T-cell (primary cell): ENCODE measurements at regions of chr2 and their contacts with region 1.

Region 1: GRCh38 chr2:112277596-112278220 is 2.3 kb downstream of the ZC3H6 start:
- DNase-seq: peak in 1 of 35 experiments; percentile 54
- ATAC-seq: no peak
- H3K4me3 ChIP-seq: no peak overlapping the region
- H3K4me3 Mint-ChIP-seq: peak overlapping the region in 2 of 3 donors; percentile 80 to 90
- H3K27ac ChIP-seq: no peak overlapping the region
- H3K27ac Mint-ChIP-seq: peak overlapping the region in 1 of 2 donors; percentile 28
- H3K4me1 ChIP-seq: peaks cover 7 to 10% of the 10 kb centered on the region in 2 experiments
- H3K4me1 Mint-ChIP-seq: peaks cover 41 to 45% (median 44%) of the 10 kb centered on the region in 3 donors
- H3K27me3 ChIP-seq: no peaks in the 10 kb centered on the region
- H3K27me3 Mint-ChIP-seq: no peaks in the 10 kb centered on the region

Region 2: GRCh38 chr2:112121682-112122254 is 155.9 kb before region 1 on chr2:
- CTCF ChIA-PET with region 1: no interaction called
- POLR2A ChIA-PET with region 1: no interaction called
- DNase-seq: peak in 24 of 35 experiments; percentile 12 to 76 (median 40)
- ATAC-seq: peak in 1 of 4 experiments; percentile 39
- H3K4me3 ChIP-seq: no peak overlapping the region
- H3K4me3 Mint-ChIP-seq: no peak overlapping the region
- H3K27ac ChIP-seq: no peak overlapping the region
- H3K27ac Mint-ChIP-seq: no peak overlapping the region
- H3K4me1 ChIP-seq: no peaks in the 10 kb centered on the region
- H3K4me1 Mint-ChIP-seq: no peaks in the 10 kb centered on the region
- H3K27me3 ChIP-seq: no peaks in the 10 kb centered on the region
- H3K27me3 Mint-ChIP-seq: no peaks in the 10 kb centered on the region

Region 3: GRCh38 chr2:112674229-112674628 is 396.5 kb after region 1 on chr2:
- CTCF ChIA-PET with region 1: interaction called in 1 of 2 experiments, 4 read pairs
- POLR2A ChIA-PET with region 1: interaction called, 3 to 31 read pairs
- DNase-seq: peak in 1 of 35 experiments; percentile 37
- ATAC-seq: no peak
- H3K4me3 ChIP-seq: no peak overlapping the region
- H3K4me3 Mint-ChIP-seq: no peak overlapping the region
- H3K27ac ChIP-seq: no peak overlapping the region
- H3K27ac Mint-ChIP-seq: no peak overlapping the region
- H3K4me1 ChIP-seq: no peaks in the 10 kb centered on the region
- H3K4me1 Mint-ChIP-seq: peaks cover 0 to 2% (median 0%) of the 10 kb centered on the region in 3 donors
- H3K27me3 ChIP-seq: no peaks in the 10 kb centered on the region
- H3K27me3 Mint-ChIP-seq: peaks cover 3% of the 10 kb centered on the region in 2 donors